ENCODE measurements at regions of chr6 and their contacts with region 1.

Region 1: GRCh38 chr6:106360410-106360988 is at the start of gene CRYBG1:
- DNase-seq: peak; percentile 56 to 75 (median 71)
- H3K4me3 ChIP-seq: peak within 1 kb of the TSS; percentile 58
- H3K4me3 Mint-ChIP-seq: peak within 1 kb of the TSS; percentile 67 to 91 (median 84)
- H3K27ac ChIP-seq: no peak within 1 kb of the TSS
- H3K27ac Mint-ChIP-seq: peak within 1 kb of the TSS in 1 of 8 donors; percentile 75
- H3K4me1 ChIP-seq: peaks cover 12% of the 10 kb centered on the region
- H3K4me1 Mint-ChIP-seq: peaks cover 9 to 12% (median 12%) of the 10 kb centered on the region in 3 donors
- H3K27me3 ChIP-seq: peaks cover 18% of the 10 kb centered on the region
- H3K27me3 Mint-ChIP-seq: peaks cover 20 to 39% of the 10 kb centered on the region in 2 donors
- total RNA-seq, gene CRYBG1: 32.3 TPM

Region 2: GRCh38 chr6:106372838-106373501 is 12.5 kb after region 1 on chr6:
- CTCF ChIA-PET with region 1: interaction called, 33 read pairs
- POLR2A ChIA-PET with region 1: no interaction called
- DNase-seq: no peak
- H3K4me3 ChIP-seq: no peak overlapping the region
- H3K4me3 Mint-ChIP-seq: no peak overlapping the region
- H3K27ac ChIP-seq: no peak overlapping the region
- H3K27ac Mint-ChIP-seq: no peak overlapping the region
- H3K4me1 ChIP-seq: no peaks in the 10 kb centered on the region
- H3K4me1 Mint-ChIP-seq: no peaks in the 10 kb centered on the region
- H3K27me3 ChIP-seq: no peaks in the 10 kb centered on the region
- H3K27me3 Mint-ChIP-seq: peaks cover 9 to 16% of the 10 kb centered on the region in 2 donors

Measured in CD8-positive, alpha-beta memory T cell (primary cell).